ENCODE measurements at regions of chr12 and their contacts with region 1.

Region 1: DNA sequence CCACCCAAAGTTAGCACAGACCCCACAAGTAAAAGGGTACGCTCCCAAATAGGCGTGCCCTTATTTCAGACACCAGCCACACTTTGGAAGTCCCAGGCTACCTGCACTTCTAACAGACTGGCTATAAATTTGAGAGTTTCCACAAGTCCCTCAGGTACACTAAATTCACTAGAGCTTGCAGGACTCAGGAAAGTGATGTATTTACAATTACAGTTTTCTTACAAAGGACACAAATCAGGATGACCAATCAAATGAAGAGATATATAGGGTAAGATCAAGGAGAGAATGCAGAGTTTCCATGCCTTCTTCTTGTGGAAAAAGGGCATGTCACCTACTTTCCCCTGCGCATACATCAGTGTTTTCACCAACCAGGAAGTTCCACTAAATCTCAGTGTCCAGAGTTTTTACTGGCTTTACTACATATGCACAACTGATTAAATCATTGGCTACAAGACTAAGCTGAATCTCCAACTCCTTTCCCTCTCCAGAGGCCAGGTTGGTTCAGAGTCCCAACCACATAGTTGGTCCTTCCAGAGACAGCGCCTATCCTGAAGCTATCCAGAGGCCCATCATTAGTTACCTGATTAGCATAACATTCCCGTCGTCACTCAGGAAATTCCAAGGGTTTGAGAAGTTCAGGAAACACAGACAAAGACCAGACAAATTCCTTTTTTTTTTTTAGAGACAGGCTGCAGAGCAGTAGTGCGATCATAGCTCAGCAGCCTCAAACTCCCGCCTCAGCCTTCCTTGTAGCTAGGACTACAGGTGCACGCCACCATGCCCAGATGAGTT is 84.2 kb downstream of the DENND5B start:
- DNase-seq: no peak
- ATAC-seq: no peak; the same call in 1 of the 2 replicates
- H3K4me3 ChIP-seq: no peak overlapping the region
- H3K27ac ChIP-seq: no peak overlapping the region
- H3K4me1 ChIP-seq: peaks cover 27% of the 10 kb centered on the region
- H3K27me3 ChIP-seq: no peaks in the 10 kb centered on the region
- CTCF ChIP-seq: no peak

Region 2: DNA sequence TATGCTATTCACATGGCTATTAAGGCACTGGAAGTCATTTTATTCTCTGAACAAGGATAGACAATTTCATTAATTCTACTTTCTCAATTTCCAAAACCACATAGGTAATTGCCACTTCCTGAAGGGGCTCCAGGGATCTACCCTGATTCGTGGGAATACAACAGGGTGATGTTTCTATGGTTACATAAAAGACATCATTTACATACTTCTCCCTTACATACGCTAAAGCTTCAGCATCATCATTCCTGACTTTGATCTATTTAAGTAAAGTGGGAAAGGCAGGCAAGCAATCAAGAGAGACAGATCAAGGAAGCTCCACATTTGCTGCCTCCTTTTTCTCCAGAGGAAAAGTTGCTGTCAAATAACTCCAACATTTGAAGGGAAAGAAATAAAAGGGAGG is 62.0 kb before region 1 on chr12:
- CTCF ChIA-PET with region 1: no interaction called
- POLR2A ChIA-PET with region 1: no interaction called
- intact Hi-C with region 1: no loop called
- DNase-seq: no peak
- ATAC-seq: no peak
- H3K4me3 ChIP-seq: no peak overlapping the region
- H3K27ac ChIP-seq: no peak overlapping the region
- H3K4me1 ChIP-seq: no peaks in the 10 kb centered on the region
- H3K27me3 ChIP-seq: no peaks in the 10 kb centered on the region
- CTCF ChIP-seq: no peak

Region 3: GRCh38 chr12:31583878-31584277 is 77.2 kb after region 1 on chr12:
- CTCF ChIA-PET with region 1: no interaction called
- POLR2A ChIA-PET with region 1: interaction called, 26 read pairs
- intact Hi-C with region 1: no loop called
- DNase-seq: peak; percentile 9
- ATAC-seq: peak; percentile 73
- H3K4me3 ChIP-seq: no peak overlapping the region
- H3K27ac ChIP-seq: no peak overlapping the region
- H3K4me1 ChIP-seq: peaks cover 7% of the 10 kb centered on the region
- H3K27me3 ChIP-seq: no peaks in the 10 kb centered on the region
- CTCF ChIP-seq: no peak

Measured in PC-3 (cell line).